Dorsolateral prefrontal cortex (tissue), 120 donors: ENCODE measurements at regions of chr1 and their contacts with region 1.

Region 1: GRCh38 chr1:230797942-230798418 is 50.8 kb downstream of the CAPN9 start:
- DNase-seq: peak; percentile 48 to 78 (median 74)
- H3K4me3 ChIP-seq: peak overlapping the region in 4 of 59 donors; percentile 2 to 46 (median 10)
- H3K27ac ChIP-seq: peak overlapping the region in 56 of 59 donors; percentile 16 to 92 (median 82)
- H3K27me3 ChIP-seq: no peaks in the 10 kb centered on the region
- CTCF ChIP-seq: peak; percentile 25 to 95 (median 87)

Region 2: DNA sequence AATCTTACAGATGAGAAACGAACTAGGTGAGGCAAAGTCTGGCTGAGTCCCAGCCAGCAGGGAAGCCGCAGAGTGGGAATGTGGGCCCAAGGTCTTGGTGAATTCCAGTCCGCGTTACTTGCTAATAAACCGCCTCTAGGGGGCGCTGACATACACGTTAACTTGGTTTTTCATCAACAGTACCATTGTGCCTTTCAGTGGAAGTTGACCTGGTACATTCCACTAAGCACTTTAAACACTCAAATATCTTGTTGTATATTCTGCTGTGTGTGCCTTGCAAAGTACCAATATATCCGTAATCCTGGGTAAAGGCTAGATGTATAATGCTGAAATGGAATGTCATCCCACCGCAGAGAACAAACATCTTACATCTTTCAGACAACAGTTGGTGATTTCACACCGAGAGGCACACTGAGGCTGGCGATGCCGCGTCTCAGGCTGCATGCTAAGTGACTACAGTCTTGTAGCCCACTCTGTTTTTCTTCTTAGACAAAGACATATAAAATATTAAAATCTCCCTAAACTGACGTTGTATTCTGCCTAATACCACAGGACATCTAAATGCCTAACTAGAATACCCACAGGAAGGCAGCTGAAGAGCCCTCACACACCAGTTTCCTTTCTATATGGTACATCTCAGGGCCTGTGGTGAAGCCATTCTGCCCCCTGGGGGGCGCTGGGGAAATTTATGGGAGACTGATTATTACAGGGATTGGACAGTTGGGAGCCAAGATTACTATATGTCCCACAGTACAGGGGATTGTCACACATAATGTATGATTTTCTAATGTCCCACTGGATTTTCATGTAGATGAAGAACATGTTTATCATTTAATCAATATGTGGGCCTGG is 119.5 kb after region 1 on chr1:
- intact Hi-C with region 1: loop called (anchors 2 kb)
- DNase-seq: peak; percentile 66 to 92 (median 73)
- H3K4me3 ChIP-seq: peak overlapping the region in 1 of 59 donors; percentile 11
- H3K27ac ChIP-seq: peak overlapping the region in 55 of 59 donors; percentile 2 to 85 (median 70)
- H3K27me3 ChIP-seq: no peaks in the 10 kb centered on the region
- CTCF ChIP-seq: peak; percentile 35 to 86 (median 62)